AG04450 (cell line): ENCODE measurements at regions of chr10 and their contacts with region 1.

Region 1: GRCh38 chr10:97676770-97677581 is 10.1 kb downstream of the AVPI1 start:
- DNase-seq: no peak
- H3K4me3 ChIP-seq: no peak overlapping the region
- H3K27ac ChIP-seq: peak overlapping the region; percentile 21
- H3K27me3 ChIP-seq: no peaks in the 10 kb centered on the region
- CTCF ChIP-seq: peak; percentile 87

Region 2: GRCh38 chr10:97612386-97612785 is 64.6 kb before region 1 on chr10:
- CTCF ChIA-PET with region 1: no interaction called
- POLR2A ChIA-PET with region 1: no interaction called
- DNase-seq: peak; percentile 15
- H3K4me3 ChIP-seq: no peak overlapping the region
- H3K27ac ChIP-seq: no peak overlapping the region
- H3K27me3 ChIP-seq: no peaks in the 10 kb centered on the region
- CTCF ChIP-seq: peak; percentile 32; the same call in 1 of the 2 replicates

Region 3: DNA sequence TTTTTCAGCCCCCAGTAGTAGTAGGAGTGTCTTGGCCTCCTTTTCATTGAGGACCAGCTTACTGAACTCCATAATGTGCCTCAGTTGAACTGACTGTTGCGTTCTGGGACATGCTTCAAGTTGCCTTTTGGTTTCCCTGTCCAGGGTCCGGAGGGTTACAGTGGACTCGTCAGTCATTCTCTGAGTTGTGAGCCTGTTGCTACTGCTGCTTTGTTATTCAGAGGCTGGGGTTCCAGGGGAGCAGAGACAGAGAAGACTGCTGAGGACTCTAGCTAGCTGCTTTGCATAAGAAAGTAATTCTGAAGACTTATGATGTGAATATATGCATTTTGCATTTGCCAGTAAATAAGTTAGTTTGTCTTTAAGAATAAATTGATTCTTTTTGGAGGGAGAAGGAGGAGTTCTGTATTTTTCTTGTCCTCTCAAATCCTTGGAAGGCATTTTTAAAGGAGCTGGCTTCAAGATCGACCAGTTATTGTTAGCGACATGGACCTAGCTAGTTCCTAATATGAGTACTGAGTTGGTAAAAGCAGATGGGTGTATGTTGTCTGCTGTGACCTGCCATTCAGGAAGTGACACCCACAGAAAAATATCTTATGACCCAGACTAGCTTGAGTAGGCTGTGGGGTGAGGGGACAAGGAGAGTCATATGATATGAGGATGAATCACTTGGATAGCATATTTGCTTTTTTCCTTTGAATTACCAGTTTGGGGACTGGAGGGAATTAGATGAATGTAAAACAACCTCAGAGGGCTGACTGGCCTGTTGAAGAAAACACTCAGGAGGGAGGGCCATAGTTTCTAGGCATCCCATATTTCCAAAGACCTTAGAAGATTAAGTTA is 28.2 kb before region 1 on chr10:
- CTCF ChIA-PET with region 1: interaction called, 13 read pairs
- POLR2A ChIA-PET with region 1: interaction called, 3 read pairs
- DNase-seq: peak; percentile 59
- H3K4me3 ChIP-seq: no peak overlapping the region
- H3K27ac ChIP-seq: peak overlapping the region; percentile 67
- H3K27me3 ChIP-seq: no peaks in the 10 kb centered on the region
- CTCF ChIP-seq: no peak

Region 4: DNA sequence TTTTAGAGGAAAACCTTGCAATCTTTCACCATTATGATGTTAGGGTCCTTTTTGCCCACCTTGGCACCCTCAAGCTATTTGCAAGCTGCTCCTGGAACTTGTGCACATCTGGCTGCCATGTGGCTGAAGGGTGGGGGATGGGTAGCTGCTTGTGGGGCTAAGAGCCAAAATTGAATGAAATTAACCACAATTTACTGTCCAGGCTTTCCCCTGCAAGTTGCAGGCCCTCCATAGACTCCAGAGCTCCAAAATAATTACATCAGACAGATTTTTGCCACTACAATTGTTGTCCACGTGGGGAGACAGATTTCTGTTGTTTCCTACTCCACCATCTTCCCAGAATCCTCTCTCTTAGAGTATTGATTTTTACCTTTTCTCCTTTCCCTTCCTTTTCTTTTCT is 17.4 kb before region 1 on chr10:
- CTCF ChIA-PET with region 1: interaction called, 11 read pairs
- POLR2A ChIA-PET with region 1: no interaction called
- DNase-seq: no peak
- H3K4me3 ChIP-seq: no peak overlapping the region
- H3K27ac ChIP-seq: no peak overlapping the region
- H3K27me3 ChIP-seq: no peaks in the 10 kb centered on the region
- CTCF ChIP-seq: no peak

Region 5: DNA sequence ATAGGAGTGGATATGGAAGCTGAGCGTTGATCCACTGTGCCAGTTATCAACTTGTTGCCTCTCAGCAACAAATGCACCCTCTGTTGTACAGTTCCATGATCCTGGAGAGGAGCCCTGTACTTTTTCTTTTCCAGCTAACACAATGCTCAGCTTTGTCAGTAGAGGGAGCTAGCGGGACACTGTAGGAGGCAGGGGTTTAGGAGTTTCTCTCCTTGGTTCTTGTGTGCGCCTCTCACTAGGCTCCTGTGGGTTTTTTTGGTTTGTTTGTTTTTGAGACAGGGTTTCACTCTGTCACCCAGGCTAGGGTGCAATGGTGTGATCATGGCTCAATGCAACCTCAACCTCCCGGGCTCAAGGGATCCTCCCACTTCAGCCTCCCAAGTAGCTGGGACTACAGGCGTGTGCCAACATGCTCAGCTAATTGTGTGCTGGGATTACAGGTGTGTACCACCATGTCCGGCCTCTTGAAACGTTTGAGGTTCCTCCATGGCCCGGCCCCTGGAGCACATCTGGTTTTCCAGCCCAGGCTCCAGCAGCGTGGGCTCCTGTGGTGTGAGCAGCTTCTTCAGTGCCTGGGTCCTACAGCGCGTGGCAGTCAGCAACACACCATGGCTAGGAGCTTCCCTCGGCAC is 24.6 kb after region 1 on chr10:
- CTCF ChIA-PET with region 1: interaction called, 53 read pairs
- POLR2A ChIA-PET with region 1: no interaction called
- DNase-seq: peak; percentile 61
- H3K4me3 ChIP-seq: no peak overlapping the region
- H3K27ac ChIP-seq: no peak overlapping the region
- H3K27me3 ChIP-seq: no peaks in the 10 kb centered on the region
- CTCF ChIP-seq: peak; percentile 94

Region 6: DNA sequence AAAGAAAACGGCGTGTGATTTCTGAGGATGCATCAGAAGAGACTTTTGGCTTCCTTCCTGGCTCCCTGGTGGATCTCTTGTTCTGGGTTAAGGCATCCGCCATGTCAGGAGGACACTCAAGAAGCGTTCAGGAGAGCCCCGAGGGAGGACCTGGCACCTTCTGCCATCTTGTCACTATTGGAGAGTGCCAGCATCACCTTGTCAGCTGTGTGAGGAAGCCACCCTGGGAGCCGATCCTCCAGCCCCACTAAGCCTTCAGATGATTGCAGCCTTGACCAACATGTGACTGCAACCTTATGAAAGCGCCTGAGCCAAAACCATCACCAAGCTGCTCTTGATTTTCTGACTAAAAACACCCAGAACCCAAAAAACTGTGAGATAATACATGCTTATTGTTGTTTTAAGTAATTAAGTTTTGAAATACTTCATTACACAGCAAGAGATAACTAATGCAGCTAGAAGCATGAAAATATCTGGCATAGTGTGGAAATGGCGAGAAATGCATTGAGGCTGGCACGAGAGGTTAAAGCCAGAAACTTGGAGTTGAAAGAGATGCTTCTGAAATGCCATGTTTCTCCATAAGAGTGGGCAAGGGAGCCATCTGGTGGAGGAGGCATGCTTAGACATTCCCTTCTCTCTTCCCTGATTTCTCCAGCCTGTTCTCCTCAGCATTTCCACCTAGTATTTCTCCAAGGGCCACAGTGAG is 54.5 kb after region 1 on chr10:
- CTCF ChIA-PET with region 1: interaction called, 109 read pairs
- POLR2A ChIA-PET with region 1: interaction called, 3 read pairs
- DNase-seq: peak; percentile 61
- H3K4me3 ChIP-seq: no peak overlapping the region
- H3K27ac ChIP-seq: no peak overlapping the region
- H3K27me3 ChIP-seq: no peaks in the 10 kb centered on the region
- CTCF ChIP-seq: peak; percentile 91

Region 7: GRCh38 chr10:97736902-97737769 is 60.2 kb after region 1 on chr10 and contains the start of gene ZFYVE27:
- CTCF ChIA-PET with region 1: interaction called, 109 read pairs
- POLR2A ChIA-PET with region 1: interaction called, 3 read pairs
- DNase-seq: peak; percentile 91
- H3K4me3 ChIP-seq: peak within 1 kb of the TSS; percentile 98
- H3K27ac ChIP-seq: peak within 1 kb of the TSS; percentile 91
- H3K27me3 ChIP-seq: no peaks in the 10 kb centered on the region
- CTCF ChIP-seq: no peak
- polyA plus RNA-seq, gene ZFYVE27: 11.1 and 13.5 TPM in 2 replicates